Gastrocnemius medialis (tissue), 4 donors: ENCODE measurements at regions of chr10 and their contacts with region 1.

Region 1: DNA sequence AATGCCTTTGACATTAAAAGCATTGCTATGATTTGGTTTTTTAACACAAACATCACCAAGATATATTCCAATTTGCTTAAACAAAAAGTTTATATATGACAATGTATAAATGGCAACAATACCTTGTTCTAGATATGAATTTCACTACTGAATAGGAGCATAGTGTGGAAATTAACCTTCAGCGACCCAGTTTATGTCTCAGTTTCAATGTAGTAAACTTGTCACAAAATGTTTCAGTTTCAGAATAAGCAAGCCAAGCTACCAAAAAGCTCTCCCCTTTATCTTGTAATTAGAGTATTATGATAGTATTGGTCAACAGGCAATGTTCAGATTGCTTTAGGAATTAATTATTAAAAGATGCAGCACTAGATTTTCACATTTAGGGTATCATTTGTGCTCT is 99.6 kb upstream of the PCDH15 start:
- DNase-seq: no peak
- ATAC-seq: no peak
- H3K4me3 ChIP-seq: no peak overlapping the region
- H3K27ac ChIP-seq: no peak overlapping the region
- H3K4me1 ChIP-seq: no peaks in the 10 kb centered on the region
- H3K27me3 ChIP-seq: no peaks in the 10 kb centered on the region
- CTCF ChIP-seq: no peak
- POLR2A ChIP-seq: no peak

Region 2: GRCh38 chr10:54666192-54666591 is 234.4 kb before region 1 on chr10:
- in situ Hi-C with region 1: no loop called
- intact Hi-C with region 1: no loop called
- DNase-seq: no peak
- ATAC-seq: no peak
- H3K4me3 ChIP-seq: no peak overlapping the region
- H3K27ac ChIP-seq: no peak overlapping the region
- H3K4me1 ChIP-seq: no peaks in the 10 kb centered on the region
- H3K27me3 ChIP-seq: no peaks in the 10 kb centered on the region
- CTCF ChIP-seq: no peak
- POLR2A ChIP-seq: no peak

Region 3: GRCh38 chr10:54800741-54801421 is 99.7 kb before region 1 on chr10 and contains the start of gene PCDH15:
- in situ Hi-C with region 1: loop called in 1 of 4 experiments (anchors 25 kb)
- intact Hi-C with region 1: no loop called
- DNase-seq: no peak
- ATAC-seq: no peak
- H3K4me3 ChIP-seq: no peak within 1 kb of the TSS
- H3K27ac ChIP-seq: no peak within 1 kb of the TSS
- H3K4me1 ChIP-seq: no peaks in the 10 kb centered on the region
- H3K27me3 ChIP-seq: no peaks in the 10 kb centered on the region
- CTCF ChIP-seq: no peak
- POLR2A ChIP-seq: no peak
- total RNA-seq, gene PCDH15: not detected

Region 4: GRCh38 chr10:54869022-54869421 is 31.6 kb before region 1 on chr10:
- in situ Hi-C with region 1: no loop called
- intact Hi-C with region 1: no loop called
- DNase-seq: no peak
- ATAC-seq: no peak
- H3K4me3 ChIP-seq: no peak overlapping the region
- H3K27ac ChIP-seq: no peak overlapping the region
- H3K4me1 ChIP-seq: no peaks in the 10 kb centered on the region
- H3K27me3 ChIP-seq: no peaks in the 10 kb centered on the region
- CTCF ChIP-seq: no peak
- POLR2A ChIP-seq: no peak